ACHN (cell line): ENCODE measurements at regions of chr6 and their contacts with region 1.

Region 1: DNA sequence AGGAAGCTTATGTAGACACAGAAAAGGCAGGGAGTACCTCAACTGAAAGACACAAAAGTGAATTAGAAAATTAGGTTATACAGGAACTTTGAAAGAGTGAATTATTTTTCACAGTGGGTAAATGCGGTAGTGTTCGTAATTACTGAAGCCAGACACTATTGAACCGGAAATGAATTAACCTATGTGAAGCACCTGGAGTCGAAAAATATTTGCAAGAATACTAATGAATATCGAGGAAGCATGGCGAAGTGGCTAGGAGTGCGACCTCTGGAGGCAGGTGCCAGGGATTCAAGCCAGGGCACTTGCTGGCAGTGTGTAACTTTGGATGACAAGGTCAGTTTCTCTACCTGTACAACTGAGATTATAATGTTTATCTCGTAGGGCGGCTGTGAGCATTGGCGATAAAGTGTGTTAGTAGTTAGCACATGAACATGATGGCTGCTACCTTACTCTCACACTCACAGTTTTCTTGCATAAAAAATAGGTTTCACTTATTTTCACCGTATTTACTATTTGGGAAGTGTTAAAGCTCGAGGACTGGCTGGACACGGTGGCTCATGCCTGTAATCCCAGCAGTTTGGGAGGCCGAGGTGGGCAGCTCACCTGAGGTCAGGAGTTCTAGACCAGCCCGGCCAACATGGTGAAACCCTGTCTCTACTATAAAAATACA is 567 bp upstream of the SLC18B1 start:
- DNase-seq: peak; percentile 78

Region 2: GRCh38 chr6:132530293-132530974 is 268.6 kb before region 1 on chr6:
- in situ Hi-C with region 1: loop called (anchors 25 kb)
- DNase-seq: peak; percentile 53

Region 3: GRCh38 chr6:133236932-133237331 is 437.9 kb after region 1 on chr6:
- in situ Hi-C with region 1: no loop called
- DNase-seq: no peak